A673 (cell line): ENCODE measurements at regions of chr9 and their contacts with region 1.

Region 1: GRCh38 chr9:100322954-100323536 is 29.7 kb downstream of the TEX10 start:
- DNase-seq: peak; percentile 65
- H3K4me3 ChIP-seq: no peak overlapping the region
- H3K27ac ChIP-seq: no peak overlapping the region
- H3K4me1 ChIP-seq: no peaks in the 10 kb centered on the region
- H3K27me3 ChIP-seq: no peaks in the 10 kb centered on the region
- CTCF ChIP-seq: peak; percentile 78

Region 2: GRCh38 chr9:99266255-99267023 is 1056.6 kb before region 1 on chr9:
- CTCF ChIA-PET with region 1: no interaction called
- POLR2A ChIA-PET with region 1: no interaction called
- intact Hi-C with region 1: loop called (anchors 10 kb)
- DNase-seq: peak; percentile 85
- H3K4me3 ChIP-seq: no peak overlapping the region
- H3K27ac ChIP-seq: no peak overlapping the region
- H3K4me1 ChIP-seq: peaks cover 14% of the 10 kb centered on the region
- H3K27me3 ChIP-seq: no peaks in the 10 kb centered on the region
- CTCF ChIP-seq: peak; percentile 94

Region 3: GRCh38 chr9:99807276-99807852 is 515.7 kb before region 1 on chr9:
- CTCF ChIA-PET with region 1: no interaction called
- POLR2A ChIA-PET with region 1: no interaction called
- intact Hi-C with region 1: loop called (anchors 5 kb)
- DNase-seq: peak; percentile 82
- H3K4me3 ChIP-seq: no peak overlapping the region
- H3K27ac ChIP-seq: no peak overlapping the region
- H3K4me1 ChIP-seq: peaks cover 24% of the 10 kb centered on the region
- H3K27me3 ChIP-seq: no peaks in the 10 kb centered on the region
- CTCF ChIP-seq: peak; percentile 89

Region 4: GRCh38 chr9:100028201-100028784 is 294.8 kb before region 1 on chr9:
- CTCF ChIA-PET with region 1: no interaction called
- POLR2A ChIA-PET with region 1: no interaction called
- intact Hi-C with region 1: loop called (anchors 5 kb)
- DNase-seq: peak; percentile 81
- H3K4me3 ChIP-seq: no peak overlapping the region
- H3K27ac ChIP-seq: no peak overlapping the region
- H3K4me1 ChIP-seq: peaks cover 20% of the 10 kb centered on the region
- H3K27me3 ChIP-seq: no peaks in the 10 kb centered on the region
- CTCF ChIP-seq: peak; percentile 94

Region 5: DNA sequence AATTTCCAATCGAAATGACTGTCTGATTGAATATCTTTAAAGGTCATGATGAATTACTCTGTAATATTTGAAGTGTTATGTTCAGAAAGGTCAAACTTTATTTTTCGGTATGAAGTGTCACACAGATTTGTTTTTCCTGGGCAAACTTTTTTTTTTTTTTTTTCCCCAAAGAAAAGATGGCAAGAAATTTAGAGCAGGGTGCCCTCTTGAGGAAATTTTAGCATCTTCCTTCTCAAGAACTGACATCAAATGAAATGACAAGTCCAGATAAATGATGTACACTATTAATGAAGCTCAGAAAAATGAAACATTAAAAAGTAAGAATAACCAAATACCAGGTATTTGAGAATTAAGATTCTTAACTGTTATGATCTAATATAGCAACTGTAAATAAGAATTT is 100.4 kb before region 1 on chr9:
- CTCF ChIA-PET with region 1: interaction called, 3 read pairs
- POLR2A ChIA-PET with region 1: no interaction called
- intact Hi-C with region 1: loop called (anchors 5 kb)
- DNase-seq: peak; percentile 69
- H3K4me3 ChIP-seq: no peak overlapping the region
- H3K27ac ChIP-seq: no peak overlapping the region
- H3K4me1 ChIP-seq: no peaks in the 10 kb centered on the region
- H3K27me3 ChIP-seq: no peaks in the 10 kb centered on the region
- CTCF ChIP-seq: peak; percentile 68